PC-9 (cell line): ENCODE measurements at regions of chr17 and their contacts with region 1.

Region 1: GRCh38 chr17:9284884-9285283 is 263.6 kb downstream of the NTN1 start:
- DNase-seq: no peak
- H3K4me3 ChIP-seq: no peak overlapping the region
- H3K27ac ChIP-seq: no peak overlapping the region
- H3K4me1 ChIP-seq: no peaks in the 10 kb centered on the region
- H3K27me3 ChIP-seq: no peaks in the 10 kb centered on the region
- CTCF ChIP-seq: no peak

Region 2: GRCh38 chr17:9138101-9138717 is 146.7 kb before region 1 on chr17:
- CTCF ChIA-PET with region 1: no interaction called
- POLR2A ChIA-PET with region 1: no interaction called
- intact Hi-C with region 1: no loop called
- DNase-seq: no peak
- H3K4me3 ChIP-seq: no peak overlapping the region
- H3K27ac ChIP-seq: no peak overlapping the region
- H3K4me1 ChIP-seq: no peaks in the 10 kb centered on the region
- H3K27me3 ChIP-seq: no peaks in the 10 kb centered on the region
- CTCF ChIP-seq: no peak

Region 3: DNA sequence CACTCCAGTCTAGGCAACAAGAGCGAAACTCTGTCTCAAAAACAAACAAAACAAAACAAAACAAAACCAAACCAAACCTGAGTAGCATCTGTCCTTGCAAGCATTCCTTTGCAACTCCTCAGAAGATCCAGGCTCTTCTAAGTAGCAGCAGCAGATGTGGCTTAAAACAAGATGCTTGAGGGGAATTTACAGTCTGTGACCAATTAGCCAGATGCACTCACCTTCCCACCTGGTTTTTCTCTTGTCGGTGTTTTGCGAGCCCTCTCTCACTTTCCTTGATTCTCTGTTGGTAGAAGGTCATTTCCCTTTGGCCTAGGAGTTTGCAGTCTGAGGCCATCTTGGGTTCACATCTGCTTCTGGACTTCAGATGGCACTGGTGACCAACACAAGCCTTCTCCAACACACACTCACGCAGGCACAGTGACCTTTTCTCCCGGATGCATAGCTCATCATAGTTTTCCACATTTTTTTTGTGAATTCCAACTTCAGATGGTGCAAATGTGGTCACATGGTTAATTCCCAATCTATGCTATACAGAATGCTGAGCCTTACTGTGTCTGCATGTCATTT is 14.0 kb after region 1 on chr17:
- CTCF ChIA-PET with region 1: interaction called, 11 read pairs
- POLR2A ChIA-PET with region 1: no interaction called
- intact Hi-C with region 1: no loop called
- DNase-seq: no peak
- H3K4me3 ChIP-seq: no peak overlapping the region
- H3K27ac ChIP-seq: no peak overlapping the region
- H3K4me1 ChIP-seq: no peaks in the 10 kb centered on the region
- H3K27me3 ChIP-seq: no peaks in the 10 kb centered on the region
- CTCF ChIP-seq: no peak